ENCODE measurements at regions of chr15 and their contacts with region 1.

Region 1: DNA sequence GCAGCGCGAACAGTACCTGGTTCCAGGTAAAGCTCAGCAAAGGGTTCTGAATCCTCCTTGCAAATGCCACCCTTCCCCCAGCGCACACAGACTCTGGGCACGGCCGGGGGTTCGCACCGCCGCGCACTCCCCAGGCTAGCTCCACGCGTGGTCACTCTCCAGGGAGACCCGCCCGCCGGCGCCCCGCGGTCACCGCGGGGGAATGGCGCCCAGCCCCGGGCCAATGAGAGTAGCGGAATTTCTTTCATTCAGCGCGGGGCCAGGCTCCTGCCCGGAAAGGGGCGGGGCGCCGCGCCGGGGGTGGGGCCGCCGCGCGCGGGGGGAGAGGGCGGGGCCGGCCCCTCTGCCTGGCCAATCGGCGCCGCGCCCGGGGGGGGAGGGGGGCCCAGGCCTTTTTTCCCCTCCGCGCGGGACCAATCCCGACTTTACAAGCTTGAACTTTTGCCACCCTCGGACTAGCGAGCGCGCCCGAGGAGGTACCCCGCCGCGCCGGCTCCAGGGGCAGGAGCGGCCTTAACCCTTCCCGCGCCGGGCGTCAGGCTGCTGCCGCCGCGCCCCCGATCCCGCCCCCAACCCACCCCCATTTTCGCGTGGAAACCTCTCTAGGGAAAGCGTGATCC is 1.1 kb upstream of the SMAD6 start:
- DNase-seq: peak; percentile 95
- H3K4me3 Mint-ChIP-seq: peak overlapping the region; percentile 79
- H3K27ac Mint-ChIP-seq: no peak overlapping the region
- H3K4me1 Mint-ChIP-seq: peaks cover 12% of the 10 kb centered on the region
- H3K27me3 Mint-ChIP-seq: peaks cover 18% of the 10 kb centered on the region
- CTCF ChIP-seq: no peak

Region 2: DNA sequence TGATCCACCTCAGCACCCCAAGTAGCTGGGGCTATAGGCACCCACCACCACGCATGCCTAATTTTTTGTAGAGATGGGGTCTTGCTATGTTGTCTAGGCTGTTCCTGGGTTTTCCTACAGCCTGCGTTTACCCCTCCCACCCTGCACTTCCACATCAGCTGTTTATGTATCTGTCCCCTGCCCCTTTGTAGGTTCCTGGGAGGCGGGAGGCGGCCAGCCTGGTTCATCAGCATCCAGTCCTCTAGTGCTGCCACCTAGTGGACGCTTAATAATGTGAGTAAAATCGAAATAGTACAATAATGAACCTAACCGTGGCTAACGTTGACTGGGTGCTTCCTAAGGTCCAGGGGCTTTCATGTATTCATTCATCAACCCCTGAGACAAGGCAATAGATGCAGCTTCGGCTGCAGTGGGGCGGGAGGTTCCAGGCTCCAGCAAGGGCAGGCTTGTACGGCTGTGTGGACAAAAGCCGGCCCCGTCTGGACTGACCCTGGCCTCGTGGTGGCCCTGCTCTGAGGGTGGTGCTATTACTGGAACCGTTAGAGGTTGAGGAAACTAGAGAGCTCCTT is 133.9 kb before region 1 on chr15:
- CTCF ChIA-PET with region 1: no interaction called
- POLR2A ChIA-PET with region 1: no interaction called
- intact Hi-C with region 1: no loop called
- DNase-seq: peak; percentile 75
- H3K4me3 Mint-ChIP-seq: no peak overlapping the region
- H3K27ac Mint-ChIP-seq: no peak overlapping the region
- H3K4me1 Mint-ChIP-seq: peaks cover 12% of the 10 kb centered on the region
- H3K27me3 Mint-ChIP-seq: no peaks in the 10 kb centered on the region
- CTCF ChIP-seq: peak; percentile 48

Region 3: DNA sequence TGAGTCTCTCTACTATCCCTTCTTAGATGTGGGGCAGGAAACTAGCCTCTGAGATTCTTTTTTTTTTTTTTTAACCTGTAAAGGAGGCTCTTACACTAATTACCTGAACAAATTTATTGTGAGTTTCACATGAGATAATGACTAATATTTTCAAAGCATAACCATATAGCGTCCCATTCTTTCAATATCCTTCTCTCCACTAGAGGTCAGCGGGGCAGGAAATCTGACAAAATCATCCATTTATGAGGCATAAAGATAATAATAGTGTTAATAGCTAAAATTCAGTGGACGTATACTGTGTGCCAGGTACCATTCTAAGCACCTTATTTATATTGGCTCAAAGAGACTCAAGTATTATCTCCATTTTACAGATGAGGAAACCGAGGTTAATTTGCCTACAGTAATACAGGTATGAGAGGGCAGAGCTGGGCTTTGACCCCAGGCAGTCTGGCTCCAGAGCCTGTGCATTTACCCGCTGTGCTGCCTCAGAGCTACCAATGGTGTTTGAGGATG is 15.2 kb before region 1 on chr15:
- CTCF ChIA-PET with region 1: interaction called, 43 read pairs
- POLR2A ChIA-PET with region 1: interaction called, 4 read pairs
- intact Hi-C with region 1: loop called (anchors 2 kb)
- DNase-seq: no peak
- H3K4me3 Mint-ChIP-seq: no peak overlapping the region
- H3K27ac Mint-ChIP-seq: no peak overlapping the region
- H3K4me1 Mint-ChIP-seq: no peaks in the 10 kb centered on the region
- H3K27me3 Mint-ChIP-seq: no peaks in the 10 kb centered on the region
- CTCF ChIP-seq: peak; percentile 38

Region 4: DNA sequence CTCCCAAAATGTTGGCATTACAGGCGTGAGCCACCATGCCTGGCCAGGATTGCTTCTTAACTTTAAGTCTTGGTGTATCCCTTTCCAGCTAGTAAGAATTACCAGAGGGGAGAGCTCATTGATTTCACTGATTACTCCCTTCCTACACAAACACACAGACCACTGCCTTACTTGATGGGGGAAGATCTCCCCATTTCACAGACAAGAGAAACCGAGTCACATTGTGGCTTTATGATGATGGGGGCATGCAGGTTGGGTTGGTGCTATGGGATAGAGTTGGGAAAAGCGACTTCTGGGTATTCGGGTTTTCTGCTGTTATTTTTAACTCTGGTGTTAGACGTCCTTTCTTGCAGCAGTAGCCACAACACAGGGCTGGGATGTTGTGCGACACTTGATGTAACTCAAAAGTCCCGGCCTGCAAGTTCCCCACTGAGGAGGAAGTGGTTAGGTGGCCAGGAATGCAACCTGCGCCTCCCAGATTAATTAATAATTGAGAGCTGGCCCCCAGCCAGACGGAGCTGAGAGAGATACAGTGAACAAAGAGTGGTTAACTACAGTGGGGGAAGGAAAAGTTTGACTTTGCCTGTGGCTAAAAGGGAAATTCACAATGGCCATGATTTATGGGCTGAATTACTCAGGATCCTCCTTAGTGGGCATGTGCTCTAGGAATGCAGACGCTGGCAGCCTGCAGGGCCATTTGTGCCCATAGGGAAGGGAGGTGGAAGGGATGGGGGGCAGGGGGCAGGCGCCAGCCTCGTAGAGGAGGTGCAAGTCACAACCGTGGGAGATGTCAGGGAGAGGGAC is 64.8 kb after region 1 on chr15:
- CTCF ChIA-PET with region 1: no interaction called
- POLR2A ChIA-PET with region 1: no interaction called
- intact Hi-C with region 1: no loop called
- DNase-seq: peak; percentile 58
- H3K4me3 Mint-ChIP-seq: peak overlapping the region; percentile 8
- H3K27ac Mint-ChIP-seq: no peak overlapping the region
- H3K4me1 Mint-ChIP-seq: peaks cover 35% of the 10 kb centered on the region
- H3K27me3 Mint-ChIP-seq: no peaks in the 10 kb centered on the region
- CTCF ChIP-seq: no peak

Measured in MCF 10A (cell line).